Aorta (tissue), 5 donors: ENCODE measurements at regions of chr20 and their contacts with region 1.

Region 1: DNA sequence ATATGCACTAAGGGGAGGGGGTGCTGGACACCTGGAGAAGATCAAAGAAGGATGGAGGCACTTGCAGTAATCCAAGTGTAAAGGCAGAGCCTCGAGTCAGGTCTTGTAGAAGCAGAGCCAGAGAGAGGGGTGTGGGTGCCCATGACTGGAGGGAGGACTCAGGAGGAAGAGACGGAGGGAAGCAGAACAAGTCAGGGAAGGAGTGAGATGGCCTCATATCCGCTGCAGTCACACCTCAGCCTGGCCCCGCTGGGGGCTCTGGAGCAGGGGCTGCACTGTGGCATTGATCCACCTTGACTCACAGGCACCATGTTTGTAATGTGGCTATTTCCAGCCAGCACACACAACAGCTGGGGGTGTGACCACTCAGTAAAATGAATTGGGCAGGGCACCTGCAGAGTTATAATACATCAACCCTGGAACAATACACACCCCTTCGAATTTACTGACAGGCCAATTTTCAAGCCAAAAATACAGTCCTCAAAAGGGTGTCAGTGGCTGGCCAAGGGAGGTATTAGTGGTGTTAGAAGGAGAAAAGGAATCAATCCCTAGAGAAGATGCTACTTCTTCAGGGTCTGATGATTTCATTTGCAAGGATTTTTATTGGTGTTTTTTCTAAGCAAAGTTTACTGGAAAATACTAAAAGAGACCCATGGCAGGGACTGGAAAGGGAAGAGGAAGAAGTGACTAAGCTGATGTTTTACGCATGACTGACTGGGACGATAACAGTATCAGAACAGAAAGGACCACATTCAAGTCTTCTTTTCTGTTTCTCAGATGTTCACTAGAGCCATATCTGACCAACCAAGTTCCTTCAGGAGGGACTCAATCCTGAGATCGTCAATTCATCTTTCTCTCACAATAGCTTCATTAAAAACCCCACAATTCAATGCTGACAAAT is 18.9 kb upstream of the NXT1 start:
- DNase-seq: no peak
- ATAC-seq: no peak
- H3K4me3 ChIP-seq: no peak overlapping the region
- H3K27ac ChIP-seq: no peak overlapping the region
- H3K4me1 ChIP-seq: no peaks in the 10 kb centered on the region
- H3K27me3 ChIP-seq: no peaks in the 10 kb centered on the region

Region 2: DNA sequence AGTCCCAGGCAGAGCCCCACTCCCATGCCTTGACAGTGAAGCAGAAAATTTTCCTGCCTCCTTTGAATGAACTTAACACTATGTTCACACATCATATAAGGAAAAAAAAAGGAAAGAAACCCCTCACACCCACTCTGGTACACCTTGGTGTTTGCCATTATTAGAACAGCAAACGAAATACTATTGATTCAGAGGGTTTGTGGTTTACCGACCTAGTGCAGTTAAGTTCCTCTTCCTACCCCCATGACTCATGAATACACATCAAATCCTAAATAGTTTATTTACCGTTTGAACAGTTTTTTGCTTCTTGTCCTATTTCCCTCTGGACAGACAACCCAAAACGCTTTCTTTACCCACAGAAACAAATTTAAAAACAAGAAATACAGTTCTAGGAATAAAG is 985.0 kb before region 1 on chr20:
- intact Hi-C with region 1: loop called in 1 of 2 experiments (anchors 10 kb)
- DNase-seq: no peak
- ATAC-seq: no peak
- H3K4me3 ChIP-seq: no peak overlapping the region
- H3K27ac ChIP-seq: no peak overlapping the region
- H3K4me1 ChIP-seq: no peaks in the 10 kb centered on the region
- H3K27me3 ChIP-seq: peaks cover 0 to 2% of the 10 kb centered on the region in 2 donors

Region 3: GRCh38 chr20:23277316-23277715 is 54.4 kb before region 1 on chr20:
- intact Hi-C with region 1: loop called in 1 of 2 experiments (anchors 5 kb)
- DNase-seq: no peak
- ATAC-seq: no peak
- H3K4me3 ChIP-seq: no peak overlapping the region
- H3K27ac ChIP-seq: no peak overlapping the region
- H3K4me1 ChIP-seq: no peaks in the 10 kb centered on the region
- H3K27me3 ChIP-seq: no peaks in the 10 kb centered on the region